ENCODE measurements at regions of chr19 and their contacts with region 1.

Region 1: GRCh38 chr19:29610563-29611271 is 4.6 kb downstream of the POP4 start:
- DNase-seq: peak; percentile 70
- H3K4me3 ChIP-seq: no peak overlapping the region
- CTCF ChIP-seq: peak; percentile 87

Region 2: DNA sequence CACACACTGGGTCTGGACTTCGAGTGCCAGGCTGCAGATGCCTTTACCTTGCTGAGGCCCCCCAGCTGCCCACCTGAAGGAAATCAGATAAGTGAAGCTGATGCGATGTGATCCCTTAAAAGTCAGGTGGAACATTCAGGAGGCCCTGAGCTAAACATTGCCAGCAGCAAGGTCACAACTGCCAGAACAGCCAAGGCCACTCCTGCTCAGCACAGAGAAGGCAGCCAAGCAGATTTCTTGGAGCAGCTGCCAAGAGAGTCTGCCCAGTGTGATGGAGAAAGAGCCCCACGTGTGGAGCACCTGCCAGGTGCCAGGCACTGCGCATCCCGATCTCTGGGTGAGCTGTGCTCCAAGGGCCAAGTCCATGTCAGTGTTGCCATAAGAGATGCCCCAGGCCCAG is 377.1 kb before region 1 on chr19:
- in situ Hi-C with region 1: no loop called
- DNase-seq: no peak
- H3K4me3 ChIP-seq: no peak overlapping the region
- CTCF ChIP-seq: no peak

Region 3: DNA sequence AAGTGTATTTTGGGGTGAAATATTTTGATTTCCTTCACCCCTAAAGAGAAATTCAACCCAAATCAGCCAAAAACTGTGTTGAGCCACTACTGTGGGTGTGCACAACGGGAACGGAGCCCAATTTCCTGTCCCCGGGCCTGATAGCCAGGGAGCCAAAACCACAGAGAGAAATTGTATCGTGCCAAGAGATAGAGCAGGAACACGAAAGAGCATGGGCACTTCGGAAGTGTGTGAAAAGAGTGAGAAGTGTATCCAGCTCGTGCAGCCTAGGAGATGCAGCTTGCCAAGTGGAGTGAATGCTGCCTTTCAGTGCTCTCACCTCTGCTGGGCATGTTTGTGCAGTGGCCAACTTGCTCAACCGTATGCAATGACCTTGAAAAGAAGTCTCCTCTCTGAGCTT is 35.2 kb after region 1 on chr19:
- in situ Hi-C with region 1: loop called (anchors 5 kb)
- DNase-seq: no peak
- H3K4me3 ChIP-seq: no peak overlapping the region
- CTCF ChIP-seq: no peak

Region 4: DNA sequence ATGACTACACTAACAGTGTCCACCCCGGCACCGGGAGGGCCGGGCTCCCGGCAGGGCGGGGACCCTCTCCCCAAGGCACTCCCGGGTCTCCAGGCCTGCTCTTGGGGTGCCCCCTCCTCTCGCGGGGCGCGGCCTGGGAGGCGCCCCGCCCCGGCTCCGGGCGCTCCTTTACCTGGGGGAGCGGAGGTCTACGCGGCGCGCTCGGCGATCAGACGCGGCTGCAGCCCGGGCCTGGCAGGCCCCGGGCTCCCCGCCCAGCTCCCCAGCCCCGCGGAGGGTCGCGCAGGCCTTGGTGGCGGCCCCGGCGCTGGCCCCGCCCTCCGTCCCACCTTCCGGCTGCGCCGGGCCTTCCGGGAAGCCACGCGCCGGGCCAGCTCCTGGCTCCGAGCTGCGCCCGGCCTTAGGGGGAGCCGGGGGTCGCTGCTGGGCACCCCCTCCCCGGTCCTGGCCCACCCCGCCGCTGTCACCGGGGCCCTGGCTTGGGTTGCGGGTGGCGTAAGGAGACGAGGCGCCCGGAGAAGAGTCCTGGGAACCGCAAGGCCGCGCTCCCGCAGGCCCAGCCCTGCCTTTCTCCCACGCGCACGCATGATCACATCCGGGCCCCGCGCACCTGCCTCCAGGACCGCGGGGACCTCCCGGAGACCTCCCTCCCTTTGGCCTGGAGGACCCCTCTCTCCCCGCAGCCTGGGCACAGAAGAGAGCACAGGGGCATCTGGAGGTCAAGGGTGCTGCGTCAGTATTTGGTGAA is 104.4 kb after region 1 on chr19 and contains the start of gene C19orf12:
- in situ Hi-C with region 1: loop called (anchors 5 kb)
- DNase-seq: no peak
- H3K4me3 ChIP-seq: peak within 1 kb of the TSS; percentile 85
- CTCF ChIP-seq: no peak

Region 5: GRCh38 chr19:29844891-29845572 is 234.3 kb after region 1 on chr19:
- in situ Hi-C with region 1: loop called (anchors 25 kb)
- DNase-seq: peak; percentile 69
- H3K4me3 ChIP-seq: peak overlapping the region; percentile 65
- CTCF ChIP-seq: no peak

Region 6: GRCh38 chr19:30649934-30650614 is 1039.4 kb after region 1 on chr19:
- in situ Hi-C with region 1: loop called (anchors 25 kb)
- DNase-seq: peak; percentile 42
- H3K4me3 ChIP-seq: no peak overlapping the region
- CTCF ChIP-seq: peak; percentile 89